ENCODE measurements at regions of chr1 and their contacts with region 1.

Region 1: GRCh38 chr1:174534789-174535188 is 87.0 kb downstream of the GPR52 start:
- DNase-seq: peak; percentile 82
- ATAC-seq: peak; percentile 71
- H3K4me3 ChIP-seq: no peak overlapping the region
- H3K27ac ChIP-seq: no peak overlapping the region
- H3K4me1 ChIP-seq: peaks cover 2% of the 10 kb centered on the region; the same call in 1 of the 2 replicates
- H3K27me3 ChIP-seq: no peaks in the 10 kb centered on the region
- CTCF ChIP-seq: no peak
- POLR2A ChIP-seq: no peak
- RAD21 ChIP-seq: no peak

Region 2: DNA sequence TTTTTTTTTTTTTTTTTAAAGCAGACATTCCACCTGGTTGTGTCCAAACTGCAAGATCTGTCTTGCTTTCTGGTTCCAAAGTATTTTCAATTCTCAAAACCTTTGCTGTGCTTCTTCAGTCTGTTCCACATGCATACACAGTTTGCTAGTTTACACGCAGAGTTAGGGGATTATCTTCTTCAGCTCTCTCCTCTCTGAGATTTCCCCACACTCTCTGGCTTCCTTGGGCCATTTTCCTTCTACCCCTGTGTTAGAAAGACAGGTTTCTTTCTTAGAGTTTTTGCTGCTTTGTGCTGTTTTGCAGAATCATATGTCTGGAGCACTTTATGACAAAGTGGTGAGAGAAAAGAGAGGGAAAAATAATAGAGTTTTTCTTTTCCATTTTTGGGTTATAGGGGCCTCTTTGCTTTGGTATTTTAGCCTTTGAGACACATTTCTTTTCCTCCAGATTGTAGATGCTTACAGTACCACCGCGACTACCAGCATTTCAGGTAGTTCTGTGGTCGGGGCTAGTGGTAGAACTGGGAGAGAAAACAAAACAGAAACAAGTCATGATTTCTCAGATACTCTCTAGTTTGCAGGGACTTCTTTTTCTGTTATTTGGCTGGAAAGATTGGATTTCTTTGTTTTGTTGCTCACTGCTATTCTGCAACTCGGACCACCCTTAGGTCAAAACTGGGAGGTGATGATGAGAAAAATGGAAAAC is 309.1 kb before region 1 on chr1:
- CTCF ChIA-PET with region 1: no interaction called
- POLR2A ChIA-PET with region 1: no interaction called
- dilution Hi-C with region 1: no loop called
- in situ Hi-C with region 1: no loop called
- intact Hi-C with region 1: no loop called
- DNase-seq: no peak
- ATAC-seq: no peak
- H3K4me3 ChIP-seq: no peak overlapping the region
- H3K27ac ChIP-seq: no peak overlapping the region
- H3K4me1 ChIP-seq: no peaks in the 10 kb centered on the region
- H3K27me3 ChIP-seq: no peaks in the 10 kb centered on the region
- CTCF ChIP-seq: no peak
- POLR2A ChIP-seq: no peak
- RAD21 ChIP-seq: no peak

Region 3: DNA sequence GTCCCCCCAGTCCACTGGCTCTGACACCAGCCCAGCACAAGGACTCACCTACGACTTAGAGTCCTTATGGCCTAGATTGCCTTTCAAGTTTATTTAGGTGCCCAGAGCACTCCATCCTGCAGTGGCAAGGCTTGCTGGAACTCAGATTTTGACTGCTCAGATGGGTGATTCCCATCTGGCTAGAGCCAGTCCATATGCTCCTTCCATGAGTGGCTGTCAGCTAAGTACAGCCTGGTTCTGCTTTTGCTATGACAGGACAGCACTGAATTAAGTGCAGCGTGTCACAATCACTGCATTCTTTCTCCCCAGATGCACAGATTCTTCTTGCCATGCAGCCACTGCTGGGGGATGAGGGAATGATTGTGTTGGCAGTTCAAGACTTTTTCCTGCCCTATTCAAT is 43.2 kb before region 1 on chr1:
- CTCF ChIA-PET with region 1: no interaction called
- POLR2A ChIA-PET with region 1: no interaction called
- dilution Hi-C with region 1: no loop called
- in situ Hi-C with region 1: no loop called
- intact Hi-C with region 1: loop called (anchors 1 kb)
- DNase-seq: no peak
- ATAC-seq: no peak
- H3K4me3 ChIP-seq: no peak overlapping the region
- H3K27ac ChIP-seq: no peak overlapping the region
- H3K4me1 ChIP-seq: no peaks in the 10 kb centered on the region
- H3K27me3 ChIP-seq: no peaks in the 10 kb centered on the region
- CTCF ChIP-seq: no peak
- POLR2A ChIP-seq: no peak
- RAD21 ChIP-seq: no peak

Measured in IMR-90 (cell line).